ENCODE measurements at regions of chr18 and their contacts with region 1.

Region 1: DNA sequence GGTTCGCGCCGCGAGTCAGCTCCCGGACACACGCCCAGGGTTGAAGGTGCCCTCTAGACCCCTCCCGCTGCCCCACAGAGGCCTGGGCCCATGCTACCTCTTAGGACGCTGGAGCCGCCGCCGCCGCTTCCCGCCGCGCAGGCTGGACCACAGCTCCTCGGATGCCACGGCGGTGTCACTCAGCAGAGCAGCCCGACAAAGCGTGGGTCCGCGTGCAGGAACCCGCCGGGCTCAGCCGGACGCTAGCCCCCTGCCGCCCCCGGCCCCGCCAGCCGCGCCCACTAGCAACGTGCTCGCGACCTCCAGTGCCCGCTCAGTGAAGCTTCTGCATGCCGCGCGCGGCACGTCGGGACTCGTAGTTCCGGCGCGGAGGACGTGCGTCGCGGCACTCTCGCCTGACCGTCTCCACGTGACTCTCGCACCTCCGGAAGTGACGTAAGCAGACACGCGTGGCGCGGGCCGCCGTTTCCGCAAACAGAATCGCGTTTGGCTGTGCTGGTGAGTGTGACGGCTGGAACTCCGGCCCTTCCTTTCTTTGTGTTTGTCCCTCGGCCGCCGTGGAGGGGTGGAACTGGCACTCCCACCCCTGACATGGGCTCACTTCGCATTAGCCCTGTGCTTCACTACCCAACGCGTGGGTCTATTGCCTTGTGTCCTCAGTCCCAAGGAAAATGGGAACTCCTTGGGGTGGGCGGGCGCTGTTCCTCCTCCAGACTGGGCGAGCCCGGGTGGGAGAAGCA is at the starts of genes FAM210A and RNMT:
- DNase-seq: peak; percentile 99
- H3K4me3 Mint-ChIP-seq: peak within 1 kb of the TSS; percentile 85
- H3K27ac Mint-ChIP-seq: peak within 1 kb of the TSS; percentile 83
- H3K4me1 Mint-ChIP-seq: peaks cover 57% of the 10 kb centered on the region
- H3K27me3 Mint-ChIP-seq: no peaks in the 10 kb centered on the region
- total RNA-seq, gene FAM210A: 37.2 and 42.3 TPM in 2 replicates
- total RNA-seq, gene RNMT: 57.8 and 65.9 TPM in 2 replicates

Region 2: DNA sequence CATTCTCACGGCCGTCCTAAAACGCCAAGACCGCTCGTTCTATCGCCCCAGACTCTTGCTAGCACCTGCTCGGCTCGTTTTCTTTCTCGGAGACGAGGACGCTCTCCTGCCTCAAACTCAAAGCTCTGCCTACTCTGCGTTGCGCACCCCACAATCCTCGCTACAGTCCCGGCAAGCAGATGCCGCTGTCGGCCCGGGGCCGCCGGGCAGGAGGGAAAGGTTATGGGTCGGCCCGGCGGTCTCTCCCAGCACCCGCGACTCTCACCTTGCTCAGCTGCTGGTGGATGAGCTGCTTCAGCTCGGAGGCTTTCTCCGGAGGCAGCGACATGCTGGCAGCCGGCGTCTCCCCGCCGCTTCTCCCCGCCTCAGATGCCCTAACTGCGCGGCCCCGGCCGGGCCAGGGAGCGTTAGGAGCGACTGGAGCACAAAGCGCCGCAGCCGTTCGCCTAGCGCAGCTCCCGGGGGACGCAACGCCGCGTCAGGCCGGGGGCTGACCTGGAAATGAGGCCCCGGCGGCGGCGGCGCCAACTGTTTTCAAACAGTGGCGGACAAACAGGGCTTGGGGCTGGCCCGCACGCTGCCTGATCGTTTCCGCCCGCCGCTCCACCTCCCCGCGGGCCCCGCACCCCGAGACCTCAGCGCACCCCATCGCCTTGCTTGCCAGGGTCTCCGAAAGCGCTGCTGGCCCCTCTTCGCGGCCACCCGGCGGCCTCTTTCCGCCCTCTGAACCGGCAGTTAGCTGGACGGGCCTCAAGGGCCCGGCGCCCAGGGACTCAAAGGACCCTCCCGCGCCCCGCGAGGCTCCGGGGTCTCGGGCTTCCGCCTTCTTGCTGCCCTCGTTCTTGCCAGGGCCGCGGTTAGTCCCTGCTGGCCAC is 1023.9 kb before region 1 on chr18 and contains the starts of genes CEP76 and PSMG2:
- intact Hi-C with region 1: loop called (anchors 10 kb)
- DNase-seq: peak; percentile 96
- H3K4me3 Mint-ChIP-seq: peak within 1 kb of the TSS; percentile 97
- H3K27ac Mint-ChIP-seq: peak within 1 kb of the TSS; percentile 97
- H3K4me1 Mint-ChIP-seq: peaks cover 36% of the 10 kb centered on the region
- H3K27me3 Mint-ChIP-seq: no peaks in the 10 kb centered on the region
- total RNA-seq, gene CEP76: 14.4 and 16.3 TPM in 2 replicates
- total RNA-seq, gene PSMG2: 109 and 111 TPM in 2 replicates

Region 3: DNA sequence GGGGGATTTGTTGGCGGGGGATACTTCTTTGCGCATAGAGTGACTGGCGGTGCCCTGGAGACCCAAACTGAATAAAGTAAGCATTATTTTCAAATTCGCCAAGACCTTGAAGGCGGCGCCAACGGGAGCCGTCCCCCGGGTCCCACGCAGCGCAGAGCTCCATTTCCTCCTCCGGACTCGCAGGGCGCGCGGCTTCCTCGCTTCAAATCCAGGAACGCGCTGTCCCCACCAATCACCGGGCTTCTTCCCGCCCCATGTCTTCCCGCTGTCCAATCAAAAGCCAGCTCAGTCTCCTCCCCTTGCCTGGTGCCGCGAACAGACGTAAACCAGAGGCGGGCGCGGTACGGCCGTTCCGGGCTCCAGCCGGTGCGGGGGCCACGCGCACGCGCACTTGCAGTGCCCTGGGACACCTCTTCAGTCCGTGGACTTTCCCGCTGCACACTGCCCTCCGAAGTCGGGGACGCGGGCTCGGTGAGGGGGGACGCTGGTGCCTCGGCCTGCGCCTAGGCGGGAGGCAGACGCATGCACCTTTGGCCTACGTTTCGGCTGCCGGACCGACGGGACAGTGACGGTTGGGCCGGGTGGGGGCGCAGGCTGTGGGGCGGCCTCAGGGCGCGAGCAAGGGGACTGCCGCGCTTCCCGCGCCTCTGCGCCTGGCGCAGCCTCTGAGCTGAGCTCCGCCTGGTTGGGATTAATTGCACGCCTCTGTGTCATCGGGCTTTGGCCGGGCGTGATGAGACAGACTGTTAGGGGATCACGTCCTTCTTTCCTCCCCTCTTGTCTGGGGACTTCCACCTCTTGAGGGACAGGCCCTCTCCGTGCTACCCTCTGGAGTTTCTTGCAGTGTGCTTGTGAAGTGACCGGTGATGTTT is 735.2 kb before region 1 on chr18 and contains the start of gene CEP192:
- intact Hi-C with region 1: loop called (anchors 1 kb)
- DNase-seq: peak; percentile 99
- H3K4me3 Mint-ChIP-seq: peak within 1 kb of the TSS; percentile 94
- H3K27ac Mint-ChIP-seq: peak within 1 kb of the TSS; percentile 92
- H3K4me1 Mint-ChIP-seq: peaks cover 16% of the 10 kb centered on the region
- H3K27me3 Mint-ChIP-seq: no peaks in the 10 kb centered on the region
- total RNA-seq, gene CEP192: 31.4 and 34.7 TPM in 2 replicates

Region 4: DNA sequence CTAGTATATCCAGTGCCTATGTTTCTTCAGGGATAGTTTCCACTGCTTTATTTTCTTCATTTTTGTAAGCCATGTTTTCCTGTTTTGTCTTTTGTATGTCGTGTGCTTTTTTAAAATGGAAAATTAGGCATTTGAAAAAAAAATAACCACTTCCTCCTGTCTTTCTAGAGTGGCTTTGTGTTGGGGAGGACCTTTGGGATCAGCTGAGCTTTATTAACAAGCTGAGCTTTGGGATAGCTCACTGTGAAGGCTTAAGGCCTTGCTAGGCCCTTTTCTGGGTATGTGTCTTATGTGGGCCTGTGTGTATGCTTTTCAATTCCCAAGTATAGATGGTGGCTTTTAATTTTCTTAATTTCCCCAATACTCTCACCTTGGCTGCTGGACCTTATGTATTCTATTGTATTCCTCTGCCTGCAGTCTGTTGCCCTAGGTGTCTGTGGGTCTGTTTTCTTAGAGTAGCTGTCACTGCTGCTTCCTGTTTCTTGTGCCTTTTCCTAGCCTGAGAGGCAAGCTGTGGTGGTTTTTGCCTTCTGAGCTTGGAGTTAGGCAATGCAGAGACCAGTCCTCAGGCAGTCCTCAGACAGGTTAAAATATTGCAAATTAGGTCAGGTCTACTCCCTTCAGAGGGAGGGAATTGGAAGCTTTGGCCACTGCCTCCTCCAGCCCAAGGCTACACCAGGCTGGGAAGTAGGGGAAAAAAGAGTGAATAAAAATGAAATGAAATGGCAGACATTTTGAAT is 373.1 kb before region 1 on chr18:
- intact Hi-C with region 1: no loop called
- DNase-seq: peak; percentile 76
- H3K4me3 Mint-ChIP-seq: peak overlapping the region; percentile 39
- H3K27ac Mint-ChIP-seq: peak overlapping the region; percentile 62
- H3K4me1 Mint-ChIP-seq: peaks cover 18% of the 10 kb centered on the region
- H3K27me3 Mint-ChIP-seq: no peaks in the 10 kb centered on the region

Region 5: DNA sequence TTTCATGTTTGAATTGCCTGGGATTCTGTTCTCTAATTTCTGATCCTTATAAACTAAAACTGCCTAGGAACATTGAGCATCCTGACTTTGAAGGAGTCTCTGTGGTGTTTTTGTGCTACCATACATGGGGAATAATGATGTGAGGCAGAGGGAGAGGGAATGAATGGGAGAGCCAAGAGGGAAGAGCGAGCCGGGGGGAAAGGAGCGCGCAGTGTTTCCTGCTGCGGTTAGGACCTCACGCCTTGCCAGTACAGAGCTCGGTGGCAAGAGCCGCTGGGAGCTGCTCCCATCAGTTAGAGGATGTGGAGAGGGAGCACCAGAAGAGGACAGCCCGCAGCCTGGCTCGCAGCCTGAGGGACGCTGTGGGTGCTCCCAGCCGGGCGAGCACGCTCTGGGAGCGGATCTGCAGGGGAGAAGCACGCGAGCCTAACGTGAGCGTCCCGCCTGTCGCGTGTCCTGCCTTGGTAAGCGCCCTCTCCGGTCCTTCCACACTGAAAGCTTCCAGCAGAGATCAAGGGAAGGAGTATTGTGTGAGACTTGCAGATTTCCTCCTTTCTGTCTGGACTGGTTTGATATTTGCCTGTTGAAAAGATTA is 114.7 kb before region 1 on chr18:
- intact Hi-C with region 1: loop called (anchors 5 kb)
- DNase-seq: no peak
- H3K4me3 Mint-ChIP-seq: peak overlapping the region; percentile 94
- H3K27ac Mint-ChIP-seq: peak overlapping the region; percentile 97
- H3K4me1 Mint-ChIP-seq: peaks cover 72% of the 10 kb centered on the region
- H3K27me3 Mint-ChIP-seq: no peaks in the 10 kb centered on the region

Region 6: GRCh38 chr18:13672657-13673056 is 53.7 kb before region 1 on chr18:
- intact Hi-C with region 1: loop called (anchors 10 kb)
- DNase-seq: no peak
- H3K4me3 Mint-ChIP-seq: no peak overlapping the region
- H3K27ac Mint-ChIP-seq: no peak overlapping the region
- H3K4me1 Mint-ChIP-seq: peaks cover 3% of the 10 kb centered on the region
- H3K27me3 Mint-ChIP-seq: no peaks in the 10 kb centered on the region

Region 7: DNA sequence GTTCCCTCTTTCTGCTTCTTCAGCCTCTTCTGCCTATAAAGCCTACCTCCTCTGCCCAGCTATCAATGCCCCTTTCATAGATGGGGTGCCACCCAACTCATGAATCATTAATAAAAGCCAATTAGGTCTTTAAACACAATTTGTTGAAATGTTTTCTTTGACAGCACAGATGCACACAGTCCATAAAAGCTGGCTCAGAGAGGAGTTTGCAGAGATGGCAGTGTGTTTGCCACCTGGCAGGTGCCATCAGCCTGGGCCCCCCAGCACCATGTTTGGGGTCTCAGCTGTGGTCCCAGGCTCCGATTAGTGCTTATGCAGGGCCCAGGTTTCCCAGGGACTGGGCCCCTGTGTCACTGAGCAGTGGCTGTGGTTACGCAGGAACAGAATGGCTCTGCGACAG is 196.8 kb after region 1 on chr18:
- intact Hi-C with region 1: no loop called
- DNase-seq: no peak
- H3K4me3 Mint-ChIP-seq: no peak overlapping the region
- H3K27ac Mint-ChIP-seq: no peak overlapping the region
- H3K4me1 Mint-ChIP-seq: no peaks in the 10 kb centered on the region
- H3K27me3 Mint-ChIP-seq: no peaks in the 10 kb centered on the region